ENCODE measurements at regions of chr2 and their contacts with region 1.

Region 1: DNA sequence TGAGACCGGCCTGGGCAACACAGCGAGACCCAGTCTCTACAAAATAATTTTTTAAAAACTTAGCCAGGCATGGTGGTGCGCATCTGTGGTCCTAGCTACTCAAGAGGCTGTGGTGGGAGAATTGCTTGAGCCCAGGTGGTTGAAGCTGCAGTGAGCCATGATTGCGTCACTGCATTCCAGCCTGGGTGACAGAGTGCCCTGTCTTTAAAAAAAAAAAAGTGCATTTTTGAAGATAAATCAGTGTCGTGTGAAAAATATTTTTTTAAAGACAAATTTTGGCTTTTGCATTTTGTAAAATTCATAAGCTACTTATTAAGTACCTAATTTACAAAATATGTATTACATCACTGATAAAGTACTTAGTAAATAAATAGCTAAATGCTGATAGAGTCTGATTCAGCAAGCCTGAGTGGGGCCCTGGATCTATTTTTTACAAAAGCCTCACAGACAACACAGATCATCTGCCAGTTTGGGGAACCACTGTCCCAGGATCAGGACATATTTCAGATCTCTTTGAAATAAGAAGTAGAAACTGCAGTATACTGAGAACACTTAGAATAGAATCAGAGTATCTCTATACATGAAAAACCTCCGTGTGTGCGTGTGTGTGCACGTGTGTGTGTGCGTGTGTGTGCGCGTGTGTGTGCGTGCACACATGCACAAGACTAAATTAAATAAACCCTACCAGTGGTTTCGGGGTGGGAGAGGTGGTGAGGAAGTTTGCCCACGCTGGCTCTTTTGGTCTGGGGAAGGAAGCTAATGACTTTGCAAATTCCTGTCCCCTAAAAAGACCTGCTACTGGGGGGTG is 61.6 kb downstream of the AAK1 start:
- DNase-seq: peak; percentile 40
- ATAC-seq: peak; percentile 64
- H3K4me3 ChIP-seq: peak overlapping the region; percentile 44; the same call in 1 of the 2 replicates
- H3K27ac ChIP-seq: peak overlapping the region; percentile 28
- H3K4me1 ChIP-seq: peaks cover 28% of the 10 kb centered on the region
- H3K27me3 ChIP-seq: no peaks in the 10 kb centered on the region
- CTCF ChIP-seq: no peak
- EP300 ChIP-seq: no peak
- POLR2A ChIP-seq: no peak
- RAD21 ChIP-seq: no peak

Region 2: DNA sequence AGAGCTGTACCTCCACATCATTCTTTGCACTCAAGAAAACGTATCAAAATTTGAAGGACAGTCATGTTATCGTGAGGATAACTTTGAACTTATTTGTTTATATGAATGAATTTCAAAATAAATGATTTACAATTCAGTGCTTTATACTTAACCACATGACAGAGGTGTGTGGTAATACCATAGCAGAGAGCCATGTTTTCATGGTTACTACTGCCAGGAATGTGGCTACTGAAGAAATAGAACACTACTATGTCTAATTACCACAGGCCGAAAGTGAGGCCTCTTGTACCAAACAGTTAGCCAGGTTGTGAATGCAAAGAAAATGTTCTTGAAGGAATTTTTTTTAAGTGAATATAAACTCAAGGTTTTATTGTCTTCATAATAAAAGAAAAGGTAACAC is 12.4 kb after region 1 on chr2:
- CTCF ChIA-PET with region 1: interaction called, 11 read pairs
- POLR2A ChIA-PET with region 1: interaction called, 12 read pairs
- RAD21 ChIA-PET with region 1: interaction called, 4 read pairs
- SMC1A ChIA-PET with region 1: interaction called, 14 read pairs
- in situ Hi-C with region 1: no loop called
- intact Hi-C with region 1: no loop called
- DNase-seq: no peak
- ATAC-seq: no peak
- H3K4me3 ChIP-seq: no peak overlapping the region
- H3K27ac ChIP-seq: no peak overlapping the region
- H3K4me1 ChIP-seq: peaks cover 21% of the 10 kb centered on the region
- H3K27me3 ChIP-seq: no peaks in the 10 kb centered on the region
- CTCF ChIP-seq: no peak
- EP300 ChIP-seq: no peak
- POLR2A ChIP-seq: no peak
- RAD21 ChIP-seq: no peak

Region 3: DNA sequence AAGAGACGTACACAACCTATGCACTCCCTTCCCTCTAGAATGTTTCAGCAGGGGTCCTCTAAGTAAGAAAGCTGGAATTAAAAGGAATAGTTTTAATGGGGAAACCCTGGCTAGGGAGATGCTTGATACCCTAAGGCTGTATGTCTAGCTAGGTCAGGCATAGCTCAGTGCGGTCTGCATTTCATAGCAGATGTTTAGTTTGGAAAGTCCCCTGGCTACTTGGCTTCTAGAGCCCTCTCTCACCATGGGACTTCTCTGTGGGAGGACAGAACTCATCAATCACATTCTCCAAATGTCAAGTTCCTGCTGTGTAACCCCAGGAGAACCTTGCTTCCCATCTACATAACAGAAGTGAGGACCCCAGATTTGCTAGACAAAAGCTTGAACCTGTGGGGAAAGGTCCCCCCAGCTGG is 135.9 kb after region 1 on chr2:
- CTCF ChIA-PET with region 1: interaction called, 10 read pairs
- POLR2A ChIA-PET with region 1: no interaction called
- RAD21 ChIA-PET with region 1: interaction called, 7 read pairs
- SMC1A ChIA-PET with region 1: interaction called, 5 read pairs
- in situ Hi-C with region 1: no loop called
- intact Hi-C with region 1: no loop called
- DNase-seq: no peak
- ATAC-seq: peak; percentile 82
- H3K4me3 ChIP-seq: no peak overlapping the region
- H3K27ac ChIP-seq: no peak overlapping the region
- H3K4me1 ChIP-seq: peaks cover 12% of the 10 kb centered on the region; the same call in 1 of the 2 replicates
- H3K27me3 ChIP-seq: no peaks in the 10 kb centered on the region
- CTCF ChIP-seq: no peak
- EP300 ChIP-seq: peak in 1 of 2 experiments; percentile 9; a peak in 1 of 4 replicates
- POLR2A ChIP-seq: no peak
- RAD21 ChIP-seq: no peak

Measured in GM12878 (cell line).